ENCODE measurements at regions of chr10 and their contacts with region 1.

Region 1: DNA sequence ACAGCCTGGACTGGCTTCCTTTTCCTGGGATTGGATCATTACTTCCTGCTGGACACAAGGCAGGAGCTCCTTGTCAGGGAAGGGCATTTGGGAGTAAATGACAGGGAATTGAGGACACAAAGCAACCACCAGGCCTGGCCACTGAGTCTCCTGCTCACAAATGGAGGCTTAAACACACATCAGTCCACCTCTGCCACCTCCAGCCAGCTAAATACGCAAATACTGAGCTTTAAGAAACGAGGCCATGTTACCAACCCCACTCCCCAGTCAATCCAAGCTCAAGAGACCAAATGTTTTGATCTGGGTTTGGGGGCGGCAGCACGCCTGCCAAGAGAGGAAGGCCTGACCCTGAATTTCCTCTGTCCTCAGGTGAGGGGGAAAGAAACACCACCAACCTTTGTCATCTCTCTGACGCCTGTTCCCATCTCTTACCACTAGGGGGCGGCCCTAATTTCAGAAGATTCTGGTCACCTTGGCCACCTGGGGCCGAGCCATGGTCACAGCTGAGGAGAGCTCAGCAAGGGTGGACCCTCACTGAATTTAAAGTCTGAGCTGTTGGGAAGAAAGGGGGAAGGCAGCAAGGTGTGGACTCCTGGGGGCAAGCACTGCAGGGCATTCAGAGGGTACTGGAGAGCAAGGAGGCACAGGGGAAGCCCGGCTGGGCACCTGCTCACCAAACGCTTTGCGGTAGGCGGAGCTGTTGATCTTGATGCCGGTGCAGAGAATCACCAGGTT is 16.5 kb downstream of the AIFM2 start:
- DNase-seq: peak in 1 of 2 experiments; percentile 84
- H3K4me3 ChIP-seq: no peak overlapping the region
- H3K27ac ChIP-seq: no peak overlapping the region
- H3K4me1 ChIP-seq: no peaks in the 10 kb centered on the region; a peak in 1 of 7 replicates
- H3K27me3 ChIP-seq: no peaks in the 10 kb centered on the region
- CTCF ChIP-seq: peak; percentile 69 to 90 (median 88)
- EP300 ChIP-seq: no peak
- POLR2A ChIP-seq: no peak
- RAD21 ChIP-seq: peak; percentile 50 to 64

Region 2: DNA sequence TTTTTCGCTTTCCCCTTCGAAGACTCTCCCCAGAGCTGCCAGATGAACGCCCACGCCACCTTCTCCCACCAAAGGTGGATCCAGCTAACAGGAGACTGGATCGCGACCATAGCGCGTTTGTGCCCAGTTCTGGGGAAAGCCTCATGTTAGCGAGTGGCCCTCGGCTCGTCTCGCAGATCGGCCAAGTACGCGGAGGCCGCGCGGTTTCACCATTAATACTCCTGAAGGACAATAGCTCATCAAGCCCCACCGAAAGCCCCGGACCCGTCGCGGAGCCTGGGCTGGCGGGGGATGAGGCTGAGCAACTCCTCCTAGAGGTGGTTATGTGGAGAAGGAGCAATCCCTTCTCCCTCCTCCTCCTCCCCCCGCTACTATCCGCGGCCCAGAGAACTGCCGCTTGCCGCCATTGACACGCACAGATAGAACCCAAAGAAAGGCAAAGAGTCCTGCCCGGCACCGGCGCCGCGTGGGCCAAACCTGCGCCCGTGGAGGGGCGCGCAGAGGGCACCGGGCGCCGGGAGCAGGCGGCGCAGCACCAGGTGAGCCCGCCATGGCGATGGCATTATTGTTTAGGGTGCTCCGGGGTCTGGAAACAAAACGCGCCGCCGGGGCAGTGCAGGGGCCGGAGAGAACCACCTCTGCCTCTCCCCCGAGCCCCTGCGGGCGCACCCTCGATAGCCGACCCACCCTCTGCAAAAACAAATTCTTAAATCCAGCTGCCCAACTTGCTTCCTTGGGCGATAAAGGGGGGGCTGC is 63.5 kb before region 1 on chr10 and contains the start of gene MACROH2A2:
- CTCF ChIA-PET with region 1: interaction called, 11 read pairs
- POLR2A ChIA-PET with region 1: no interaction called
- DNase-seq: peak; percentile 43 to 84
- H3K4me3 ChIP-seq: peak within 1 kb of the TSS; percentile 79 to 85 (median 82)
- H3K27ac ChIP-seq: no peak within 1 kb of the TSS
- H3K4me1 ChIP-seq: peaks cover 0 to 10% (median 1%) of the 10 kb centered on the region in 4 experiments; a peak in 4 of 7 replicates
- H3K27me3 ChIP-seq: peaks cover 30 to 73% (median 59%) of the 10 kb centered on the region in 4 experiments
- CTCF ChIP-seq: peak; percentile 34 to 52 (median 41)
- EP300 ChIP-seq: no peak; a peak in 1 of 3 replicates
- POLR2A ChIP-seq: peak in 1 of 2 experiments; percentile 20; a peak in 2 of 3 replicates
- RAD21 ChIP-seq: peak; percentile 27 to 42; a peak in 3 of 4 replicates
- total RNA-seq, gene MACROH2A2: 7.8 and 7.9 TPM in 2 replicates

Region 3: GRCh38 chr10:70093335-70093944 is 22.7 kb before region 1 on chr10:
- CTCF ChIA-PET with region 1: interaction called, 155 read pairs
- POLR2A ChIA-PET with region 1: no interaction called
- DNase-seq: no peak
- H3K4me3 ChIP-seq: no peak overlapping the region
- H3K27ac ChIP-seq: no peak overlapping the region
- H3K4me1 ChIP-seq: no peaks in the 10 kb centered on the region; a peak in 1 of 7 replicates
- H3K27me3 ChIP-seq: no peaks in the 10 kb centered on the region
- CTCF ChIP-seq: no peak
- EP300 ChIP-seq: no peak
- POLR2A ChIP-seq: no peak
- RAD21 ChIP-seq: no peak

Region 4: DNA sequence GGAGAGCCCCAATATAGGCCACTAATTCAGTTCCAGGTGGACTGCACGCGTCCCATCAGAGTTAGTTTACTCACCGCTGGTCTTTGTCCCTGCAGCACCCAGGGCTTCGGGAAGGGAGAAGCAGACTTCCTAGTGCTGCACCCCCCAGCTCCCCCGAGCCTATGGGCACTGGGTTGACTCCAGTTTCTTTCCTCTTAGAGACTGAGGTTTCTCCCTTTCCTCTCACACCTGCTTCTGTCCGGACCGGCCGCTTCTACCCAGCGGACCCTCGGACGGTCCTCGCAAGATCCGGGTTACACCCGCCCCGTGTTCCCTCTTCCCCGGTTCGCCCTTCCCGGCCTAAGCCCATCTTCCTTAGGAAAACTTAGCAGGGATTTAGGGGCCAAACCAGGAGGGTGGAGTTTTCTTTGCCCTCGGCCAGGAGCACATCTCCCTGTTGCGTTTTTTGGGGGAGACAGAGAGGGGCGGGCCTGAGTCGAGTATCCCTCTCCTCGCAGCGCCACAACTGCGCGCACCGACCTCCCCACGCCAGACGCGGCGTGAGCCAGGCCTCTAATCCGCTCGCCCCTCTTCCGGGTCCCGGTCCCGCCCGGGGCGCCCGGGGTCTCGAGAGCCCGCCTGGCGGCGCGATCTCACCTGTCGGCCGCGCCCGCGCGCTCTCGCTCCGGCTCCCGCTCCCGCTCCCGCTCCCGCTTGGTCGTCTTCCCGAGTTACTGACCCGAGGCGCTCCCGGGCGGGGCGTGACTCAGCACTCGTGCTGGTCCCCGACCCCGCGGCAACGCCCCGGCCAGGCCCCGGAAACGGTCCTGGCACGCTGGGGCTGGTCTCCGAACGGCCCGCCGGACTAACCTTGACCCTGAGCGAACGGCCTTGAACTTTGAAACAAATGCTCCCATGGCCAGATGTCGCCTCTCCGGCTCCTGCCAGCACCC is 16.2 kb after region 1 on chr10 and contains the start of gene AIFM2:
- CTCF ChIA-PET with region 1: interaction called, 51 read pairs
- POLR2A ChIA-PET with region 1: interaction called, 13 read pairs
- DNase-seq: peak in 1 of 2 experiments; percentile 85
- H3K4me3 ChIP-seq: peak within 1 kb of the TSS; percentile 63 to 71 (median 66)
- H3K27ac ChIP-seq: no peak within 1 kb of the TSS
- H3K4me1 ChIP-seq: peaks cover 0 to 4% (median 1%) of the 10 kb centered on the region in 4 experiments; a peak in 2 of 7 replicates
- H3K27me3 ChIP-seq: peaks cover 0 to 25% (median 19%) of the 10 kb centered on the region in 4 experiments; a peak in 6 of 7 replicates
- CTCF ChIP-seq: peak in 1 of 3 experiments; percentile 9; a peak in 1 of 4 replicates
- EP300 ChIP-seq: peak in 1 of 2 experiments; percentile 62; a peak in 1 of 3 replicates
- POLR2A ChIP-seq: peak in 1 of 2 experiments; percentile 23; a peak in 1 of 3 replicates
- RAD21 ChIP-seq: no peak
- total RNA-seq, gene AIFM2: 3.0 and 4.0 TPM in 2 replicates

Region 5: GRCh38 chr10:70234668-70235447 is 118.7 kb after region 1 on chr10:
- CTCF ChIA-PET with region 1: no interaction called
- POLR2A ChIA-PET with region 1: no interaction called
- DNase-seq: no peak
- H3K4me3 ChIP-seq: no peak overlapping the region
- H3K27ac ChIP-seq: no peak overlapping the region
- H3K4me1 ChIP-seq: peaks cover 0 to 7% (median 2%) of the 10 kb centered on the region in 4 experiments; a peak in 4 of 7 replicates
- H3K27me3 ChIP-seq: peaks cover 0 to 4% (median 0%) of the 10 kb centered on the region in 4 experiments; a peak in 2 of 7 replicates
- CTCF ChIP-seq: no peak
- EP300 ChIP-seq: no peak
- POLR2A ChIP-seq: no peak
- RAD21 ChIP-seq: no peak